CD4-positive, alpha-beta T cell (primary cell): ENCODE measurements at regions of chr2 and their contacts with region 1.

Region 1: GRCh38 chr2:234463626-234464290 is 33.1 kb downstream of the ARL4C start:
- DNase-seq: peak; percentile 64 to 93 (median 77)
- ATAC-seq: peak; percentile 89
- H3K4me3 ChIP-seq: peak overlapping the region; percentile 25
- H3K4me3 Mint-ChIP-seq: peak overlapping the region; percentile 84
- H3K27ac ChIP-seq: peak overlapping the region; percentile 81 to 93
- H3K27ac Mint-ChIP-seq: peak overlapping the region; percentile 89
- H3K4me1 ChIP-seq: peaks cover 72% of the 10 kb centered on the region
- H3K4me1 Mint-ChIP-seq: peaks cover 82% of the 10 kb centered on the region
- H3K27me3 ChIP-seq: no peaks in the 10 kb centered on the region
- H3K27me3 Mint-ChIP-seq: no peaks in the 10 kb centered on the region
- CTCF ChIP-seq: no peak

Region 2: GRCh38 chr2:234446404-234447076 is 17.2 kb before region 1 on chr2:
- CTCF ChIA-PET with region 1: interaction called, 4 read pairs
- POLR2A ChIA-PET with region 1: interaction called, 230 read pairs
- intact Hi-C with region 1: loop called in 1 of 2 experiments (anchors 1 kb)
- DNase-seq: peak; percentile 61 to 96 (median 74)
- ATAC-seq: peak; percentile 81
- H3K4me3 ChIP-seq: peak overlapping the region; percentile 18
- H3K4me3 Mint-ChIP-seq: peak overlapping the region; percentile 57
- H3K27ac ChIP-seq: peak overlapping the region; percentile 85 to 93
- H3K27ac Mint-ChIP-seq: peak overlapping the region; percentile 92
- H3K4me1 ChIP-seq: peaks cover 74% of the 10 kb centered on the region
- H3K4me1 Mint-ChIP-seq: peaks cover 86% of the 10 kb centered on the region
- H3K27me3 ChIP-seq: no peaks in the 10 kb centered on the region
- H3K27me3 Mint-ChIP-seq: no peaks in the 10 kb centered on the region
- CTCF ChIP-seq: no peak

Region 3: GRCh38 chr2:234478121-234478858 is 14.5 kb after region 1 on chr2:
- CTCF ChIA-PET with region 1: interaction called, 13 read pairs
- POLR2A ChIA-PET with region 1: interaction called, 47 read pairs
- intact Hi-C with region 1: loop called in 1 of 2 experiments (anchors 1 kb)
- DNase-seq: peak in 2 of 14 experiments; percentile 15 to 45
- ATAC-seq: peak; percentile 19
- H3K4me3 ChIP-seq: no peak overlapping the region
- H3K4me3 Mint-ChIP-seq: no peak overlapping the region
- H3K27ac ChIP-seq: no peak overlapping the region
- H3K27ac Mint-ChIP-seq: no peak overlapping the region
- H3K4me1 ChIP-seq: peaks cover 44% of the 10 kb centered on the region
- H3K4me1 Mint-ChIP-seq: peaks cover 74% of the 10 kb centered on the region
- H3K27me3 ChIP-seq: no peaks in the 10 kb centered on the region
- H3K27me3 Mint-ChIP-seq: no peaks in the 10 kb centered on the region
- CTCF ChIP-seq: no peak

Region 4: GRCh38 chr2:234483568-234484251 is 20.0 kb after region 1 on chr2:
- CTCF ChIA-PET with region 1: interaction called, 13 read pairs
- POLR2A ChIA-PET with region 1: interaction called, 47 read pairs
- intact Hi-C with region 1: loop called (anchors 1 to 2 kb)
- DNase-seq: peak; percentile 62 to 96 (median 78)
- ATAC-seq: peak; percentile 76
- H3K4me3 ChIP-seq: peak overlapping the region; percentile 19
- H3K4me3 Mint-ChIP-seq: peak overlapping the region; percentile 68
- H3K27ac ChIP-seq: peak overlapping the region; percentile 68 to 81
- H3K27ac Mint-ChIP-seq: peak overlapping the region; percentile 98
- H3K4me1 ChIP-seq: peaks cover 74% of the 10 kb centered on the region
- H3K4me1 Mint-ChIP-seq: peaks cover 94% of the 10 kb centered on the region
- H3K27me3 ChIP-seq: no peaks in the 10 kb centered on the region
- H3K27me3 Mint-ChIP-seq: no peaks in the 10 kb centered on the region
- CTCF ChIP-seq: peak; percentile 80

Region 5: DNA sequence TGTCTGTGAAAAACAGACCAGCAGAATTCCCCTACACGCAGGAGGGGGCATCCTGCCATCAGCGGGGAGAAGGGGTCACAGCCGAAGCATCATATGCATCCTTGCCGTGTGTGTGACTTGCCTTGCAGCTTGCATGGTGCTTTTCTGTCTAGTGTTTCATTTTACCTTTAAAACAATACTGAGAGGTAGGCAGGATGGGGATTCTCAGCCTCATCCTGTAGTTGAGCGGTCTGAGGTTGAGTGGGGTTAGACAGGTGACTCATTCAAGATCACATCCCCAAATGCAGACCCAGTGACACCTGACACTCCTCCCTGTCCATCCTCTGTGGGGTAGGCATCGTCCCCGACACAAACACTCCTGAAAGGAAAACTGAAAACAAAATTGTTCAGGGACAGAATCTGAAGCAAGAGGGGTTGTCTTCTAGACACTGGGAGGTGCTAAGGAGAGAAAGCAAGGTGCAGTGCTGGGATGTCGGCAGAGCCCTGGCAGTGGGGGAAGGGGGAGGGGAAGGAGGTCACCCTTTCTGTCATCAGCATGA is 25.2 kb after region 1 on chr2:
- CTCF ChIA-PET with region 1: interaction called, 13 read pairs
- POLR2A ChIA-PET with region 1: interaction called, 47 read pairs
- intact Hi-C with region 1: loop called (anchors 1 to 2 kb)
- DNase-seq: peak; percentile 55 to 94 (median 69)
- ATAC-seq: peak; percentile 69
- H3K4me3 ChIP-seq: peak overlapping the region; percentile 94
- H3K4me3 Mint-ChIP-seq: peak overlapping the region; percentile 82
- H3K27ac ChIP-seq: peak overlapping the region; percentile 70 to 96
- H3K27ac Mint-ChIP-seq: peak overlapping the region; percentile 98
- H3K4me1 ChIP-seq: peaks cover 75% of the 10 kb centered on the region
- H3K4me1 Mint-ChIP-seq: peaks cover 92% of the 10 kb centered on the region
- H3K27me3 ChIP-seq: no peaks in the 10 kb centered on the region
- H3K27me3 Mint-ChIP-seq: no peaks in the 10 kb centered on the region
- CTCF ChIP-seq: no peak

Region 6: GRCh38 chr2:234494361-234495250 is 30.8 kb after region 1 on chr2:
- CTCF ChIA-PET with region 1: interaction called, 3 read pairs
- POLR2A ChIA-PET with region 1: interaction called, 45 read pairs
- intact Hi-C with region 1: loop called in 1 of 2 experiments (anchors 1 kb)
- DNase-seq: peak in 8 of 14 experiments; percentile 21 to 80 (median 46)
- ATAC-seq: peak; percentile 33
- H3K4me3 ChIP-seq: peak overlapping the region; percentile 94
- H3K4me3 Mint-ChIP-seq: peak overlapping the region; percentile 98
- H3K27ac ChIP-seq: peak overlapping the region; percentile 70 to 96
- H3K27ac Mint-ChIP-seq: peak overlapping the region; percentile 98
- H3K4me1 ChIP-seq: peaks cover 42% of the 10 kb centered on the region
- H3K4me1 Mint-ChIP-seq: peaks cover 65% of the 10 kb centered on the region
- H3K27me3 ChIP-seq: no peaks in the 10 kb centered on the region
- H3K27me3 Mint-ChIP-seq: peaks cover 5% of the 10 kb centered on the region
- CTCF ChIP-seq: no peak

Region 7: DNA sequence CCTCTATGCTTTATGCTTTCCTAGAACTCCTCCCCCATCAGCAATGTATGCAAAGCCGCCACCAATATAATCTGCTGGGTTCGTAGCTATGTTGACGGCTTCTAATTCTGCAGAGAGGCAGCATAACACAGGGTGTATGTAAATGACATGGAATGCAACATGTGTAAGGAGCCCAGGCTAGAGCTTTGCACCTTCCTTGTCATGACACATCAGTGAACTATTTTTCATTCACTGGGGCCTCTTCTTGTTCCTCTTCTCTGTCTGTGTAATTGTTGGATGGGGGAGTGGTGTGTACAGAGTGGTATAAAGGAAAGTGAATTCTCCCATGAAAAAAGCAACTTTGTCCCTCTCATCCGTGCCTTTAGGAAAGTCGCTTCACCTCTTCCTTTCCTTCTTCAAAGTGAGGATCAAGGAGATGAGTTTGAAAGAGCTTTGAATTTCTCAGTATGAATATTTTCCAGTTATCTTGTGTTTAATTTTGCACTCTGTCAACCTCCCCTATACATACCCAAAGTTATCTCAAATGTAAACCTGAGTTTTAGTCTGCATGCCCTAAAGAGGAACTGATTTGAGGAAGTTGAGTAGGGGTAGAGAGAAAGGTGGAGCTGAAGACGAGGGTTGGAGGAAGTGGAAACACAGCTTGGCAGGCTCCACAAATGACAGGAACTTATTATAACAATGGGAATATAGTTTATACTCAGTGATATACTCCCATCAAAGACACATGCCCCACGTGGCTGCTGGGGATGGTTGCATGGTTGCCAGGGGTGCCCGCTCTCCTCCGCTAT is 108.1 kb after region 1 on chr2:
- CTCF ChIA-PET with region 1: no interaction called
- POLR2A ChIA-PET with region 1: no interaction called
- intact Hi-C with region 1: no loop called
- DNase-seq: peak in 3 of 14 experiments; percentile 10 to 22 (median 19)
- ATAC-seq: no peak
- H3K4me3 ChIP-seq: no peak overlapping the region
- H3K4me3 Mint-ChIP-seq: no peak overlapping the region
- H3K27ac ChIP-seq: no peak overlapping the region
- H3K27ac Mint-ChIP-seq: no peak overlapping the region
- H3K4me1 ChIP-seq: no peaks in the 10 kb centered on the region
- H3K4me1 Mint-ChIP-seq: no peaks in the 10 kb centered on the region
- H3K27me3 ChIP-seq: peaks cover 11 to 12% of the 10 kb centered on the region in 2 experiments
- H3K27me3 Mint-ChIP-seq: peaks cover 44% of the 10 kb centered on the region
- CTCF ChIP-seq: no peak

Region 8: GRCh38 chr2:234725528-234726264 is 261.9 kb after region 1 on chr2:
- CTCF ChIA-PET with region 1: no interaction called
- POLR2A ChIA-PET with region 1: no interaction called
- intact Hi-C with region 1: no loop called
- DNase-seq: no peak
- ATAC-seq: no peak
- H3K4me3 ChIP-seq: no peak overlapping the region
- H3K4me3 Mint-ChIP-seq: no peak overlapping the region
- H3K27ac ChIP-seq: no peak overlapping the region
- H3K27ac Mint-ChIP-seq: no peak overlapping the region
- H3K4me1 ChIP-seq: no peaks in the 10 kb centered on the region
- H3K4me1 Mint-ChIP-seq: no peaks in the 10 kb centered on the region
- H3K27me3 ChIP-seq: no peaks in the 10 kb centered on the region
- H3K27me3 Mint-ChIP-seq: peaks cover 14% of the 10 kb centered on the region
- CTCF ChIP-seq: no peak